RWPE1 (cell line): ENCODE measurements at regions of chr2 and their contacts with region 1.

Region 1: GRCh38 chr2:15485949-15486348 is 75.2 kb downstream of the NBAS start:
- DNase-seq: no peak
- H3K27ac ChIP-seq: no peak overlapping the region
- CTCF ChIP-seq: no peak

Region 2: GRCh38 chr2:15498554-15498953 is 12.6 kb after region 1 on chr2:
- CTCF ChIA-PET with region 1: no interaction called
- POLR2A ChIA-PET with region 1: interaction called, 12 read pairs
- DNase-seq: no peak
- H3K27ac ChIP-seq: no peak overlapping the region
- CTCF ChIP-seq: no peak